ENCODE measurements at regions of chr11 and their contacts with region 1.

Region 1: DNA sequence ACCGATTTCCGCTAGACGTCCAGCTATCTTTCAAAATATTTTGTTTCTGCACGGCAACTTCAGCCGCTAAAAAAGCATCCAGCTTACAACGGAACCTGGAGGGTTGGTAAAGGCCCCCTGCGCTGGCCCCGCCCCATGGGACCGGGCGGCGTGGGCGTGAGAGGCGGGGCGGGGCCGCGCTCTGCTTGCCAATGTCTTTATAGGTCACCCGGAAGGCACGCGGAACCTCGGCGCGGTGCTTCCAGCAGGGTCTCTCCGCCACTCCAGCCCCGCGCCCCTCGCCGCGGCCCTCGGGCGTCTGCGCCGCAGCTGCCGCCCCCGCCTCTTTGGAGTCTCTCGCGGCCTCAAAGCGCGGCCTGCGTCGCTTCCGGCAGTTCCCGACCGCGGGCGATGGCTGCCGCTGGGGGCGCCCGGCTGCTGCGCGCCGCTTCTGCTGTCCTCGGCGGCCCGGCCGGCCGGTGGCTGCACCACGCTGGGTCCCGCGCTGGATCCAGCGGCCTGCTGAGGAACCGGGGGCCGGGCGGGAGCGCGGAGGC is at the start of gene FDX1:
- DNase-seq: peak; percentile 82
- ATAC-seq: peak; percentile 91
- H3K4me3 Mint-ChIP-seq: peak within 1 kb of the TSS; percentile 98
- H3K27ac Mint-ChIP-seq: peak within 1 kb of the TSS; percentile 97
- H3K4me1 Mint-ChIP-seq: peaks cover 38% of the 10 kb centered on the region
- H3K27me3 Mint-ChIP-seq: no peaks in the 10 kb centered on the region
- total RNA-seq, gene FDX1: 10.0 to 10.5 TPM

Region 2: GRCh38 chr11:110195845-110196754 is 233.7 kb before region 1 on chr11:
- CTCF ChIA-PET with region 1: interaction called, 100 read pairs
- POLR2A ChIA-PET with region 1: no interaction called
- DNase-seq: no peak
- ATAC-seq: no peak
- H3K4me3 Mint-ChIP-seq: no peak overlapping the region
- H3K27ac Mint-ChIP-seq: no peak overlapping the region
- H3K4me1 Mint-ChIP-seq: peaks cover 14% of the 10 kb centered on the region
- H3K27me3 Mint-ChIP-seq: peaks cover 12% of the 10 kb centered on the region

Region 3: GRCh38 chr11:110349138-110349996 is 80.4 kb before region 1 on chr11:
- CTCF ChIA-PET with region 1: interaction called, 10 read pairs
- POLR2A ChIA-PET with region 1: interaction called, 8 read pairs
- DNase-seq: peak; percentile 46
- ATAC-seq: peak; percentile 74
- H3K4me3 Mint-ChIP-seq: peak overlapping the region; percentile 41
- H3K27ac Mint-ChIP-seq: peak overlapping the region; percentile 94
- H3K4me1 Mint-ChIP-seq: peaks cover 51% of the 10 kb centered on the region
- H3K27me3 Mint-ChIP-seq: no peaks in the 10 kb centered on the region

Region 4: DNA sequence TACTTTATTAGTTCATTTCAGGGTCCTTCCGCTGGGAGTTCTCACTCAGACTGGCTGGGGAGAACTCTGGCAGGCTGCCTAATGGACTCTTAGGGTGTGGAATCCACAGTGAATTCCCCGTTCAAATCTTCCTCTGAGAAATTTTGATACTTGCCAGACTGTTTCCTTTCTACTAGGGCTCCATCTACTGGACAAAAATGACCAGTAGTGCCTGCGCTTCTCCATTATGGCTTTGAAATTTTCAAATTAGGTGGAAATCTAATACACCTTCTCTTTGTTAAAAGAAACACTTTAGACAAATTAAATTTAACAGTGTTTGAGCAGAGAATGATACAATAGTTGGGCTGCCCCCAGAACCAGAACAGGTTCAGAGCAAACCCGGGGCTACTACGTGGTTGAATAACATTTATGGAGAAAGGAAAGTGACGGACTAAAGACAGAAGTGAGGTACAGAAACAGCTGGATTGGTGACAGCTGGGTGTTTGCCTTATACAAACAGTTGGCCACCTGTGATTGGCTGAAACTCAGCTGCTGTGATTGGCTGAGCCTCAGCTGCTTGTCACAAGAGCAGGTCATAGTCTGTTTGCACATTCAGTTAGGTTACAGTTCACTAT is 53.0 kb before region 1 on chr11:
- CTCF ChIA-PET with region 1: interaction called, 20 read pairs
- POLR2A ChIA-PET with region 1: no interaction called
- DNase-seq: peak; percentile 42
- ATAC-seq: peak; percentile 74
- H3K4me3 Mint-ChIP-seq: no peak overlapping the region
- H3K27ac Mint-ChIP-seq: no peak overlapping the region
- H3K4me1 Mint-ChIP-seq: peaks cover 12% of the 10 kb centered on the region
- H3K27me3 Mint-ChIP-seq: no peaks in the 10 kb centered on the region

Region 5: DNA sequence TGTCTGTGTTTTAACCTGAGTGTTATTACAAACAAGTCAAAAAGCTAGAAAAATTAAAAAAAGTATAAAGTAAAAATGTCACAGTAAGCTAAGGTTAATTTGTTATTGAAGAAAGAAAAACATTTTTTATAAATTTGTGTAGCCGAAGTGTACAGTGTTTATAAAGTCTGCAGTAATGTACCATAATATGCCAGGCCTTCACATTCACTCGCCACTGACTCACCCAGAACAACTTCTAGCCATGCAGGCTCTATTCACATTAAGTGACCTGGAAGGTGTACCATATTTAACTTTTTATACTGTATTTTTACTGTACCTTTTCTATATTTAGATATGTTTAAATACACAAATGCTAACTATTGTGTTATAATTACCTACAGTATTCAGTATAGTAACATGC is 14.7 kb before region 1 on chr11:
- CTCF ChIA-PET with region 1: interaction called, 10 read pairs
- POLR2A ChIA-PET with region 1: interaction called, 5 read pairs
- DNase-seq: no peak
- ATAC-seq: no peak
- H3K4me3 Mint-ChIP-seq: no peak overlapping the region
- H3K27ac Mint-ChIP-seq: no peak overlapping the region
- H3K4me1 Mint-ChIP-seq: no peaks in the 10 kb centered on the region
- H3K27me3 Mint-ChIP-seq: no peaks in the 10 kb centered on the region

Region 6: GRCh38 chr11:110447897-110448745 is 18.3 kb after region 1 on chr11:
- CTCF ChIA-PET with region 1: interaction called, 51 read pairs
- POLR2A ChIA-PET with region 1: no interaction called
- DNase-seq: no peak
- ATAC-seq: no peak
- H3K4me3 Mint-ChIP-seq: no peak overlapping the region
- H3K27ac Mint-ChIP-seq: no peak overlapping the region
- H3K4me1 Mint-ChIP-seq: peaks cover 28% of the 10 kb centered on the region
- H3K27me3 Mint-ChIP-seq: no peaks in the 10 kb centered on the region

Region 7: GRCh38 chr11:111230122-111230465 is 800.3 kb after region 1 on chr11:
- CTCF ChIA-PET with region 1: interaction called, 22 read pairs
- POLR2A ChIA-PET with region 1: no interaction called
- DNase-seq: no peak
- ATAC-seq: peak; percentile 78
- H3K4me3 Mint-ChIP-seq: peak overlapping the region; percentile 66
- H3K27ac Mint-ChIP-seq: no peak overlapping the region
- H3K4me1 Mint-ChIP-seq: peaks cover 25% of the 10 kb centered on the region
- H3K27me3 Mint-ChIP-seq: peaks cover 26% of the 10 kb centered on the region